Heart left ventricle (tissue), 16 donors: ENCODE measurements at regions of chr5 and their contacts with region 1.

Region 1: GRCh38 chr5:102782311-102782770 is 27.2 kb downstream of the PAM start:
- DNase-seq: no peak
- ATAC-seq: no peak
- H3K4me3 ChIP-seq: no peak overlapping the region
- H3K27ac ChIP-seq: peak overlapping the region in 11 of 12 donors; percentile 7 to 74 (median 38)
- H3K4me1 ChIP-seq: peaks cover 0 to 48% (median 32%) of the 10 kb centered on the region in 12 donors
- H3K27me3 ChIP-seq: no peaks in the 10 kb centered on the region
- CTCF ChIP-seq: no peak
- POLR2A ChIP-seq: no peak

Region 2: GRCh38 chr5:102865510-102866236 is 83.3 kb after region 1 on chr5:
- intact Hi-C with region 1: loop called in 8 of 10 experiments (anchors 5 to 10 kb)
- DNase-seq: peak; percentile 82 to 90 (median 87)
- ATAC-seq: peak; percentile 90 to 97 (median 96)
- H3K4me3 ChIP-seq: peak overlapping the region; percentile 45 to 85 (median 74)
- H3K27ac ChIP-seq: peak overlapping the region; percentile 85 to 95 (median 93)
- H3K4me1 ChIP-seq: peaks cover 0 to 57% (median 20%) of the 10 kb centered on the region in 12 donors
- H3K27me3 ChIP-seq: no peaks in the 10 kb centered on the region
- CTCF ChIP-seq: peak in 1 of 12 donors; percentile 4
- POLR2A ChIP-seq: peak in 1 of 2 donors; percentile 90

Region 3: DNA sequence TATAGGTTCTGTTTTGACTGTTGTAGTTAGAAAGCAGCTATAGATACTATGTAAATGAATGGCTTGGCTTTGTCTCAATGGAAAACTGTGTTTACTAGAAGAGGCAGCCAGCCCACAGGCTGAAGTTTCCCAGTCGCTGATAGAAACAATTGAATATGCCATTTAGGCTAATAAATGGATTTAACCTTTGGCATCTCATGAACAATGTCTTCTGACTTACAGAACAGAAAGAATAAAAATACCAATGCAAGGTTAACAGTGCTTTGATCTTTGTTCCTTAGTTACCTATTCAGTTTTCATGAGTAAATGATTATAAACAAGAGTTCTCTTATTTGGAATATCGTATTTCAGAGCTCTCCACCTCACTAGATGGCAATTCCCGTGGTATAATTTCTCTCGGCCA is 93.4 kb after region 1 on chr5:
- intact Hi-C with region 1: no loop called
- DNase-seq: no peak
- ATAC-seq: no peak
- H3K4me3 ChIP-seq: no peak overlapping the region
- H3K27ac ChIP-seq: peak overlapping the region in 2 of 12 donors; percentile 11 to 21
- H3K4me1 ChIP-seq: peaks cover 0 to 34% (median 10%) of the 10 kb centered on the region in 12 donors
- H3K27me3 ChIP-seq: no peaks in the 10 kb centered on the region
- CTCF ChIP-seq: no peak
- POLR2A ChIP-seq: no peak

Region 4: GRCh38 chr5:102946971-102947370 is 164.6 kb after region 1 on chr5:
- intact Hi-C with region 1: loop called in 1 of 10 experiments (anchors 10 kb)
- DNase-seq: peak in 4 of 5 donors; percentile 26 to 61 (median 30)
- ATAC-seq: peak; percentile 53 to 94 (median 88)
- H3K4me3 ChIP-seq: no peak overlapping the region
- H3K27ac ChIP-seq: peak overlapping the region in 1 of 12 donors; percentile 0
- H3K4me1 ChIP-seq: peaks cover 0 to 23% (median 7%) of the 10 kb centered on the region in 12 donors
- H3K27me3 ChIP-seq: no peaks in the 10 kb centered on the region
- CTCF ChIP-seq: no peak
- POLR2A ChIP-seq: no peak

Region 5: GRCh38 chr5:102971697-102972293 is 189.5 kb after region 1 on chr5:
- intact Hi-C with region 1: loop called (anchors 5 to 10 kb)
- DNase-seq: no peak
- ATAC-seq: peak in 2 of 4 donors; percentile 52 to 53
- H3K4me3 ChIP-seq: no peak overlapping the region
- H3K27ac ChIP-seq: no peak overlapping the region
- H3K4me1 ChIP-seq: peaks cover 0 to 16% (median 5%) of the 10 kb centered on the region in 12 donors
- H3K27me3 ChIP-seq: no peaks in the 10 kb centered on the region
- CTCF ChIP-seq: peak in 11 of 12 donors; percentile 27 to 62 (median 46)
- POLR2A ChIP-seq: no peak